Spleen (tissue), 13 donors: ENCODE measurements at regions of chr11 and their contacts with region 1.

Region 1: GRCh38 chr11:45964911-45965389 is 42.5 kb downstream of the LARGE2 start:
- DNase-seq: no peak
- H3K4me3 ChIP-seq: no peak overlapping the region
- H3K27ac ChIP-seq: peak overlapping the region in 4 of 8 donors; percentile 4 to 43 (median 11)
- H3K4me1 ChIP-seq: peaks cover 0 to 13% (median 2%) of the 10 kb centered on the region in 6 donors
- H3K27me3 ChIP-seq: no peaks in the 10 kb centered on the region
- CTCF ChIP-seq: peak; percentile 81 to 93 (median 89)
- POLR2A ChIP-seq: no peak

Region 2: GRCh38 chr11:46050003-46050461 is 85.1 kb after region 1 on chr11:
- intact Hi-C with region 1: no loop called
- DNase-seq: no peak
- H3K4me3 ChIP-seq: no peak overlapping the region
- H3K27ac ChIP-seq: no peak overlapping the region
- H3K4me1 ChIP-seq: peaks cover 0 to 26% (median 7%) of the 10 kb centered on the region in 6 donors
- H3K27me3 ChIP-seq: no peaks in the 10 kb centered on the region
- CTCF ChIP-seq: no peak
- POLR2A ChIP-seq: no peak

Region 3: DNA sequence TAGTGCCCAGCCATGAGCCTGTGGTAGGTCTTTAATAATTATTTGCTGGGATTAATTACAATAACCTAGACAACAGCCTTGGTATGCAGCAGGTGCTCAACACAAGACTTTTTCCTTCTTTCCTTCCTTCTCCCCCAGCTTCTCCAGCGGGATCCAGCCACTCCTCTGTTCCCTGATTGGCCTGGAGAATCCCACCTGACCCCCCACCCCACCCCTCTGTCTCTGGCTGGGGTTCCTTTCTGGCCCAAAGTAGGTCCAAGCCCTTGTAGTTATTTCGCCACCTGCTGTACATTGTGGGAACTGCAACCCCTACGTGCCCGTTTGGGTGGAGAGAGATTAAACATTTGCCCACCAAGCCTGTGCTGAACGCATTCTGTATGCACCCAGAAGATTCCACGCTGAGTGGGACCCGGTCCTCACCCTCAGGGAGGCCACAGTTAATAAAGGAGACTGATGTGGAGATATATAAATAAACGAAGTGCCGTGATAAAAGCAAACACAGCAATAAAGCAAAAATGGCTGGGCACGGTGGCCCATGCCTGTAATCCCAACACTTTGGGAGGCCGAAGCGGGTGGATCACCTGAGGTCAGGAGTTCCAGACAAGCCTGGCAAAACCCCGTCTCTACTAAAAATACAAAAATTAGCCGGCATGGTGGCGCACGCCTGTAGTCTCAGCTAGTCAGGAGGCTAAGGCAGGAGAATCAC is 350.2 kb after region 1 on chr11:
- intact Hi-C with region 1: loop called (anchors 10 kb)
- DNase-seq: peak; percentile 81
- H3K4me3 ChIP-seq: no peak overlapping the region
- H3K27ac ChIP-seq: peak overlapping the region in 2 of 8 donors; percentile 12 to 26
- H3K4me1 ChIP-seq: peaks cover 12 to 44% (median 23%) of the 10 kb centered on the region in 6 donors
- H3K27me3 ChIP-seq: no peaks in the 10 kb centered on the region
- CTCF ChIP-seq: peak; percentile 83 to 96 (median 92)
- POLR2A ChIP-seq: no peak